PC-9 (cell line): ENCODE measurements at regions of chr2 and their contacts with region 1.

Region 1: DNA sequence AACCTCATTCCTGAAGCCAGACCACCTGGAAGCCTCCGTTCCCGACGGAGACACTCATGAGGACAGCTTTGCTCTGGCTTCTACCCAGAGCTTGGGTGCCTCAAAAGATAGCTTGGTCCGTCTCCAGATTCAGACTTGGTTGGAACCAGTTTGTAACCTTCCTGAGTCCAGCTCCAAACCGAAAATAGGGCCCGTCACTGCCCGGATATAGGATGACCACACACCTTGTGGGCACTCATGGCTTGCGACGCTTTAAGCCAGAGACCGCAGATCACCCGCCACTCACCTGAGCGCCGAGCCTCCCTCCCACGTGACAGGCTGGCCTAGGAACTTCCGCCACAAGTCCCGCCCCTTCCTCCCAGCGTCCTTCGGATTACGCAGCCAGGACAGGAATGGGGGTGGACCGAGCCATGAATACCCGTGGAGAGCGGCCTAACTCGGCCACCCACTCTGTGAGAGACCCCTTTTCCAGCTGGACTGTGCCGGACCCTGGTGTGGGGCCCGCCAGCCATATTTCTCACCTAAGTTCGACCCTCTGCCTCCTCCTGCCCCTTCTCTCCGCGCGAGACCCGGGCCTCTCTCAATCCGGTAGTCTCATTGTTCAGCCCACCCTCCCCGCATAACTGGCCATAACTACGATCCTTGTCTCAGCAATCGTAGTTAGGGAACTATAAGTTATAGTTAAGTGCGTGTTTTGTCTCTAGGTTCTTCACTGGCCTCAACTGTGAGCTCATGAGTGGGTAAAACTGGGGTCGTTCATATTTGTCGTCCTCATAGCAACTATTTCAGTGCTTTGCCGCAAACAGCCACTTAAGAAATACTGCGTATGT is at the start of gene MPV17:
- DNase-seq: peak; percentile 89 to 93
- H3K4me3 ChIP-seq: peak within 1 kb of the TSS; percentile 82
- H3K27ac ChIP-seq: peak within 1 kb of the TSS; percentile 69
- H3K4me1 ChIP-seq: peaks cover 28% of the 10 kb centered on the region
- H3K27me3 ChIP-seq: no peaks in the 10 kb centered on the region
- CTCF ChIP-seq: no peak
- total RNA-seq, gene MPV17: 42.2 and 47.5 TPM in 2 replicates

Region 2: DNA sequence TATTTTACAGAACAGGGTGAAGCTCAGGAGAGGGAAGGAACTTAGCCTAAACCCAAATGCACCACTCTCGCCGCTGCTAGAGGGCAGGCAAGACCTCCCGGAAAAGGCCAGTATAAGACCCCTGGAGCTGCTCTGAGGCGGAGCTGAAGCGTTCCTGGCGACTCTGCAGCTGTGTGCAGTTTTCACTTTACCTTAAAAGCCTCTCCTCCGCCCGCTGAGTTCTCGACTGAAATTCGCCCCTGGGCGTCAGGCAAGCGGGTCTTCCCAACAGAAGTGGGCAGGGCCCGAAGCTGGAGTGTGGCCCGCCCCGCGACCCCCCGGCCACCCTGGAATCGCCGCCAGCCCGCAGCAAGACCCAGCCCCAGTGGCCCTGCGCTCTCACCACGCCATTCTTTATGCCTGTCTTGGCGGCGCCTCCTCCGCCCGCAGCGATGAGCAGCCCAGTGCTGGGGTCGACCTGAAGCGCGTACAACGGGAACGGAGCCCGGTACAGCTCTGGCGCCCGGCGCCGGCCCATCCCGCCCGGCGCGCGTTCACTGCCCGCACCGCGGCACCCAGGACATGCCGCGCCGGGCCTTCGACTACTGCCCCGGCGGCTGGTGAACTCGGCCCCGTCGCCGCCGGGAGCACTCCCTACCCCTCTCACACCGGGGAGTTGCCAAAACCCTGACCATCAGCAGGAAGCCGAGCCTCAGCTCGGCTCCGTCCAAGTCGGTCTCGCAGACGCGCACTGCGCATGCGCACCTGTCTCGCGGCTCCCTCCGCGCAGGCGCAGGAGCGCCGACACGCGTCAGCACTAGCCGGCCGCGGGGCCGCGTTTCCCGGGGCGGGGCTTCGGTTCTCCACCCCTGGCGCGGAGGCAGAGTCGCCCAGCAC is 188.8 kb before region 1 on chr2 and contains the start of gene PREB:
- CTCF ChIA-PET with region 1: no interaction called
- POLR2A ChIA-PET with region 1: no interaction called
- intact Hi-C with region 1: loop called (anchors 1 kb)
- DNase-seq: peak; percentile 88 to 99
- H3K4me3 ChIP-seq: peak within 1 kb of the TSS; percentile 83
- H3K27ac ChIP-seq: peak within 1 kb of the TSS; percentile 12; the same call in 1 of the 2 replicates
- H3K4me1 ChIP-seq: peaks cover 10% of the 10 kb centered on the region
- H3K27me3 ChIP-seq: no peaks in the 10 kb centered on the region
- CTCF ChIP-seq: no peak; the same call in 1 of the 2 replicates
- total RNA-seq, gene PREB: 35.7 and 36.2 TPM in 2 replicates

Region 3: DNA sequence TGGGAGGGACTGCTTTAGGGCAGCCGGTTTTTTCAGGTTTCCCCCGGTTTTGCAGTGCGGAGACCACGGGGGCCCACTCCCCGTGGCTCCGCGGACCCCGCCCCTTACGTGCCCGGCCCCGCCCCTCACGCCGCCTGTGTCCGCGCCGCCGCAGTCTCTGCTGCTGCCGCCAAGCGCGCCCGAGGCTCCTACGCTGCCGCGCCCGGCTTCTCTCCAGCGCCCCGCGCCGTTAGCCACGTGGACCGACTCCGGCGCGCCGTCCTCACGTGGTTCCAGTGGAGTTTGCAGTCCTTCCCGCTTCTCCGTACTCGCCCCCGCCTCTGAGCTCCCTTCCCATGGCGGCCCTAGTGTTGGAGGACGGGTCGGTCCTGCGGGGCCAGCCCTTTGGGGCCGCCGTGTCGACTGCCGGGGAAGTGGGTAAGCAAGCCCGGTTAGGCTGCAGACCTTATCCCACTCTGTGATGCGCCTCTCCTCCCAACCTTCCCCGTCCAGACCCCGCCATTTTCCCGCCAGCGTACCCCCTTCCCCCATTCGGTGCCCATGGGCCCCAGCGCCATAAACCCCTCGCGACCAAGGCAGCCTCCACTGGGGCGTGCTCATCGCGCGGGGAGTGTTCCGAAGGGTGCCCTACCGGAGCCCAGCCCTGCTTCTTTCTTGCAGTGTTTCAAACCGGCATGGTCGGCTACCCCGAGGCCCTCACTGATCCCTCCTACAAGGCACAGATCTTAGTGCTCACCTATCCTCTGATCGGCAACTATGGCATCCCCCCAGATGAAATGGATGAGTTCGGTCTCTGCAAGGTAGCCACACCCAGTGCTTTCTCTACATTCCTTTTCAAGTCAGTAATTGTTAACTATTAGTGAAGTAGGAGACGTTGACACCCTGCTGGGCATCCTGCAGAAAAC is 105.5 kb before region 1 on chr2 and contains the start of gene CAD:
- CTCF ChIA-PET with region 1: no interaction called
- POLR2A ChIA-PET with region 1: no interaction called
- intact Hi-C with region 1: loop called (anchors 10 kb)
- DNase-seq: peak; percentile 71 to 78
- H3K4me3 ChIP-seq: peak within 1 kb of the TSS; percentile 76
- H3K27ac ChIP-seq: peak within 1 kb of the TSS; percentile 44
- H3K4me1 ChIP-seq: peaks cover 25% of the 10 kb centered on the region
- H3K27me3 ChIP-seq: no peaks in the 10 kb centered on the region
- CTCF ChIP-seq: no peak; the same call in 1 of the 2 replicates
- total RNA-seq, gene CAD: 41.5 and 70.8 TPM in 2 replicates

Region 4: GRCh38 chr2:27291865-27292264 is 31.1 kb before region 1 on chr2:
- CTCF ChIA-PET with region 1: no interaction called
- POLR2A ChIA-PET with region 1: no interaction called
- intact Hi-C with region 1: loop called (anchors 1 kb)
- DNase-seq: no peak
- H3K4me3 ChIP-seq: no peak overlapping the region
- H3K27ac ChIP-seq: peak overlapping the region; percentile 81
- H3K4me1 ChIP-seq: peaks cover 33% of the 10 kb centered on the region
- H3K27me3 ChIP-seq: no peaks in the 10 kb centered on the region
- CTCF ChIP-seq: no peak

Region 5: DNA sequence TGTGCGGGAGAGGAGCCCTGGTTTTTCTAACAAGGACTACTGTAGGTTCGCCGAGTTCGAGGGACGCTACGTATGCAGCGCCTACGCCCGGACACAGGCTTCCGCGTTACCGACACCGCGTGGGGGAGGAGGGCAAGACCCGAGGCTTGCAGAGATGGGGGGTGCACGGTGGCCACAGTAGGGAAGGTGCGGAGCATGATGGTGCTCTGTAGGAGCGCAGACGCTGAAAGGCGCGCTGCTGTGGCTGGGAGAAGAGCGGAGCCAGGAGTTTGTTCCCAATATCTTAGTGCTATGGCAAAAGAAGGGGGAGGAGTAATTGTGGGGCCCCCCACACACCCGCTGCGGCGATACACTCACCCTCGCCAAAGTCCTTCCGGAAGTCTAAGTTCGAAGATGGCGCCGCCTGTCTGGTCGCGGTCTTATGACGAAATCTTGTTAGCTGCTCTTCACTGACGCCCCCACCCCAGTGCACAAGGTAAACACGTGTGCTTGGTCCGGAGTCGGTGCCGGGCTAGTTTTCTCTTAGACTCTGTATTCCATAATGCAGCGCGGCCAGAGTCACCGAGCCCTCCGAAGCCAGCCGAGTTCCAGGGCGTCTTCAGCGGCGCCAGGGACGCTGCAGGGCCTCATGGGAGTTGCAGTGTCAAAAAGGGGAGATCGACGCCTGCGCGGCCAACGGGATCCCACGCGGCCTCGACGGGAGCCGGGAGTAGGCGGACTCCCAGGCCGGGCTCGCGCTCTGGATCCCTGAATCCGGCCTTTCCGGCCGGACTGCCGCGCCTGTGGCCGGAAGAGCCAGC is 33.6 kb after region 1 on chr2 and contains the start of gene GTF3C2:
- CTCF ChIA-PET with region 1: no interaction called
- POLR2A ChIA-PET with region 1: interaction called, 24 read pairs
- intact Hi-C with region 1: loop called (anchors 2 kb)
- DNase-seq: peak; percentile 91 to 95
- H3K4me3 ChIP-seq: peak within 1 kb of the TSS; percentile 69
- H3K27ac ChIP-seq: peak within 1 kb of the TSS; percentile 90
- H3K4me1 ChIP-seq: peaks cover 31% of the 10 kb centered on the region
- H3K27me3 ChIP-seq: no peaks in the 10 kb centered on the region
- CTCF ChIP-seq: no peak
- total RNA-seq, gene GTF3C2: 57.5 and 69.8 TPM in 2 replicates

Region 6: GRCh38 chr2:27370026-27370815 is 47.2 kb after region 1 on chr2 and contains the starts of genes EIF2B4 and SNX17:
- CTCF ChIA-PET with region 1: no interaction called
- POLR2A ChIA-PET with region 1: no interaction called
- intact Hi-C with region 1: loop called (anchors 1 kb)
- DNase-seq: peak; percentile 97 to 99
- H3K4me3 ChIP-seq: peak within 1 kb of the TSS; percentile 94
- H3K27ac ChIP-seq: peak within 1 kb of the TSS; percentile 22; the same call in 1 of the 2 replicates
- H3K4me1 ChIP-seq: peaks cover 27% of the 10 kb centered on the region
- H3K27me3 ChIP-seq: no peaks in the 10 kb centered on the region
- CTCF ChIP-seq: peak; percentile 79
- total RNA-seq, gene EIF2B4: 32.9 and 33.1 TPM in 2 replicates
- total RNA-seq, gene SNX17: 60.6 and 73.7 TPM in 2 replicates

Region 7: GRCh38 chr2:27628767-27629709 is 306.1 kb after region 1 on chr2 and contains the starts of genes CCDC121 and GPN1:
- CTCF ChIA-PET with region 1: no interaction called
- POLR2A ChIA-PET with region 1: no interaction called
- intact Hi-C with region 1: loop called (anchors 5 kb)
- DNase-seq: peak; percentile 89 to 91
- H3K4me3 ChIP-seq: peak within 1 kb of the TSS; percentile 86
- H3K27ac ChIP-seq: peak within 1 kb of the TSS; percentile 86
- H3K4me1 ChIP-seq: peaks cover 27% of the 10 kb centered on the region
- H3K27me3 ChIP-seq: no peaks in the 10 kb centered on the region
- CTCF ChIP-seq: no peak
- total RNA-seq, gene CCDC121: 1.9 and 2.9 TPM in 2 replicates
- total RNA-seq, gene GPN1: 37.3 and 45.1 TPM in 2 replicates